GM13976 (cell line): ENCODE measurements at regions of chr2 and their contacts with region 1.

Region 1: GRCh38 chr2:64873472-64873924 is 115.7 kb upstream of the SLC1A4 start:
- DNase-seq: peak; percentile 83
- CTCF ChIP-seq: peak; percentile 95

Region 2: DNA sequence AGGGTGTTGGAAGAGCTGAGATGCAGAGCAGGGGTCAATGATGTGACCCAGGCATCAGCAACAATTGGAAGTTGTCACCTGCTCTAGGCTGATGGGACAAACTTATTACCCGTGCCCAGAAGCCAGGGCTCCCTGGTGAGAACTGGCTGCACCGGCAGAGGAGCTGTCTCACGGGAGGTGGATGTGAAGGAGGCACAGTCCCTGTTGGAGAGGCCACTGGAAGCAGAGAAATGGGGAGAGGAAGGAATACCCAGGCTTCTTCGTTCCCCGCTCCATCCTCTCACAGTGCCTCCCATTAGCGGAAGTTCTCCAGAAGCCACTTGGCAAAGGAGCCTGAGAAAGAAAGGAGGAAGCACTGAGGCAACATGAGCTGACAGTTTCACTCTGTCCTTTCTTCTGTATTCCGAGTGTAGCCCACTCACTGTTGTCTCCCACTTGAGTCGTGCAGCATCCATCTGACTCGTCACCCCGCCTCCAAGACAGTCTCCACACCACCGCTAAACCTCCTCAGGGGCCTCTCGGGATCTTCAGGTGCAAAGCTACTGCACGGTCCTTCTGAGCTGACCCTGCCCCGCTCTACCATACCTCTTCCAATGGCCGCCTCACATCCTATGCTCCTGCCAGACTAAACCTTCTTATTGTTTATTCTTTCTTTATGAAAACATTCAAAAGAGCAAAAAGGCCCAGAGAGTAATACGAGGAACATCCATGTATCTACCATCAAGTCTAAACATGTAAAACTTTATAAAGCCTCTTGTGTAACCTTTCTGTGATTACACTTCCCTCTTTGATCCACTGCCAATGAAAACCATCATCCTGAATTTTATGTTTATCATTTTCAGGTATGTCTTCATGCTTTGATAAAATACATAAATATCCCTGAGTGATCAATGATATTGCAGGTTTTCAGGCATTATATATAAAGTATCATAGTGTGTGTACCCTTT is 368.5 kb before region 1 on chr2:
- in situ Hi-C with region 1: loop called (anchors 10 kb)
- DNase-seq: no peak
- CTCF ChIP-seq: no peak

Region 3: DNA sequence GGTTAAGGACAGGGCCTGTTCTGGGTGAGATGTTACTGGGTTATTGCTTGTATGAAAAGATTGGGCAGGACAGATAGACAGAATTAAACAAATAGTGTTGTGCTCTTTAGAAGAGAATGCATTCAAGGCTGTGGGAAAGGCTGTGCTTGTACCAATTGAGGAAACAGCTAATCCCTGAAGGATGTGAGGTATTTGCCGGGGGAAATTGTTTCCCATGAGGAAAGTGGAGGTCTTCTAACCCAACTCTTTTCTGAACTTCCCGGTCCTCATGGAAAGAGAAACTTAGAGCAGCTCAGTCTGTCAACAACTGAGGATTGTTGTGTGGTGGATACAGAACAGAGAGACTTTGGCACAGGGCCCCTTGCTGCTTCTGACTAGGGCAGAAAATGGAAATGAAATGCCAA is 125.2 kb after region 1 on chr2:
- in situ Hi-C with region 1: no loop called
- DNase-seq: no peak
- CTCF ChIP-seq: no peak

Region 4: DNA sequence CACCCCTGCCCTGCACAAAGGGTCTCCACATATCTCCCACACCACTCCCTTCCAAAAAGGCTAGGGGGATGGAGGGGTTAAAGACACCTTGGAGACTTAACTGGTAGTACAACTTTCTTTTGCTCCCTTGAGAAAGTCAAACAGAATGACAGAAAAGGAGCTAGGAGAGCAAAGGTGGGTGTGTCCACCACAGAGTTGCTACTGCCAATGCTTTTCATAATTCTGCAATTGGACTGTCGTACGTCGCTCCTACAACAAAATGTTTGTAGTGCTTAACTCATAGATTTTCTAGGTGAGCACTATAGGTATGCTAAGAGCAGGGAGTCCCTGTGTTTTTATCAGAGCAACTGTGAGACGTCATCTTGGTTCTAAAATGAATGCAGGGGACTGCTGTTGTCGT is 209.7 kb after region 1 on chr2:
- in situ Hi-C with region 1: no loop called
- DNase-seq: no peak
- CTCF ChIP-seq: no peak